Activated CD8-positive, alpha-beta T cell treated with anti-CD3 and anti-CD28 coated beads, Interleukin-2, amount 10 ng/mL, durations not matched to agents 7 days and 5 days (primary cell): ENCODE measurements at regions of chr5 and their contacts with region 1.

Region 1: GRCh38 chr5:76402886-76403765 is at the start of gene IQGAP2:
- DNase-seq: peak; percentile 91
- ATAC-seq: peak; percentile 63
- H3K4me3 Mint-ChIP-seq: peak within 1 kb of the TSS; percentile 89
- H3K27ac Mint-ChIP-seq: peak within 1 kb of the TSS; percentile 98
- H3K4me1 Mint-ChIP-seq: peaks cover 57% of the 10 kb centered on the region
- H3K27me3 Mint-ChIP-seq: peaks cover 4% of the 10 kb centered on the region
- total RNA-seq, gene IQGAP2: 62.7 to 72.1 TPM

Region 2: GRCh38 chr5:76325876-76326491 is 77.1 kb before region 1 on chr5:
- CTCF ChIA-PET with region 1: interaction called, 20 read pairs
- POLR2A ChIA-PET with region 1: interaction called, 22 read pairs
- DNase-seq: peak; percentile 77
- ATAC-seq: peak; percentile 94
- H3K4me3 Mint-ChIP-seq: peak overlapping the region; percentile 50
- H3K27ac Mint-ChIP-seq: peak overlapping the region; percentile 91
- H3K4me1 Mint-ChIP-seq: peaks cover 56% of the 10 kb centered on the region
- H3K27me3 Mint-ChIP-seq: peaks cover under 1% of the 10 kb centered on the region

Region 3: DNA sequence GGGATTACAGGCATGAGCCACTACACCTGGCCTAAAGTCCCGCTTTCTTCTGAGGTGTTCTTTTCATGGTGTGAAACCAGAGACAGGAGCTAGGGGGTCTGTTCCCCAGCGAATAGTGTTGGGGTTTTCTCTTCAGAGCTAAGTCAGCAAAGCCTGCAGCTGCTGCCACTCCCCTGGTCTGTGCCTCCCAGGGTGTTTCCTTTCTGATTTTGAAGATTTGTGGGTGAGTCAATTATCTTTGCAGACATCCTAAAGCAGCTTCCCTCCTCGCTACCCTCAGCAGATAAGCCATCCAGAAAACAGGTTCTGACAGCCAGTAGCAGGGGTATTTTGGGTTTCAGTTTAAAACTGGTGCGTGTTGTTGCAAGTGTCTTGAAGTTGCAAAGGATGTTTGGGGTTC is 72.0 kb before region 1 on chr5:
- CTCF ChIA-PET with region 1: interaction called, 20 read pairs
- POLR2A ChIA-PET with region 1: interaction called, 22 read pairs
- DNase-seq: peak; percentile 60
- ATAC-seq: peak; percentile 79
- H3K4me3 Mint-ChIP-seq: peak overlapping the region; percentile 45
- H3K27ac Mint-ChIP-seq: peak overlapping the region; percentile 89
- H3K4me1 Mint-ChIP-seq: peaks cover 59% of the 10 kb centered on the region
- H3K27me3 Mint-ChIP-seq: no peaks in the 10 kb centered on the region

Region 4: GRCh38 chr5:76376148-76376865 is 26.8 kb before region 1 on chr5:
- CTCF ChIA-PET with region 1: interaction called, 12 read pairs
- POLR2A ChIA-PET with region 1: interaction called, 4 read pairs
- DNase-seq: no peak
- ATAC-seq: no peak
- H3K4me3 Mint-ChIP-seq: no peak overlapping the region
- H3K27ac Mint-ChIP-seq: no peak overlapping the region
- H3K4me1 Mint-ChIP-seq: peaks cover 35% of the 10 kb centered on the region
- H3K27me3 Mint-ChIP-seq: no peaks in the 10 kb centered on the region

Region 5: DNA sequence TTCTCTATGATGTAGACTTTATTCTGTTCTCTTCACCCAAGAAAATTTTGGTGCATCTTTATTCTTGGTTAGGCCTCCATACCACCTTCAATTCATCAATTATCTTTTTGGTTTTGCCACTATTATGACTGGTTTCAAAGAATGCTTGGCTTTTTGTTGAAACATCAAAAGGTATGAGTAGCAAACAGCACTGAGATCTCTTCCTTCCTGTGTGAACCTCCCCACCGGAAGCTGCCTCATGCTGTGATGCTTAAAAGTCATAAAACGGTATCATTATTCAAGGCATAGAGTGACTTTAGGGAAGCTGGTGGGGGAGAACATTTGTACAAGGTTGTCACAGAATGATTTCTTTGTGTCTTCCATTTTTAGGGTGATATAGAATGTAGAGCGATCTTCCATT is 70.5 kb after region 1 on chr5:
- CTCF ChIA-PET with region 1: interaction called, 26 read pairs
- POLR2A ChIA-PET with region 1: interaction called, 25 read pairs
- DNase-seq: peak; percentile 81
- ATAC-seq: peak; percentile 93
- H3K4me3 Mint-ChIP-seq: peak overlapping the region; percentile 42
- H3K27ac Mint-ChIP-seq: peak overlapping the region; percentile 89
- H3K4me1 Mint-ChIP-seq: peaks cover 47% of the 10 kb centered on the region
- H3K27me3 Mint-ChIP-seq: no peaks in the 10 kb centered on the region

Region 6: GRCh38 chr5:76544268-76544926 is 141.3 kb after region 1 on chr5:
- CTCF ChIA-PET with region 1: interaction called, 114 read pairs
- POLR2A ChIA-PET with region 1: interaction called, 64 read pairs
- DNase-seq: peak; percentile 67
- ATAC-seq: peak; percentile 42
- H3K4me3 Mint-ChIP-seq: peak overlapping the region; percentile 61
- H3K27ac Mint-ChIP-seq: peak overlapping the region; percentile 91
- H3K4me1 Mint-ChIP-seq: peaks cover 62% of the 10 kb centered on the region
- H3K27me3 Mint-ChIP-seq: no peaks in the 10 kb centered on the region

Region 7: DNA sequence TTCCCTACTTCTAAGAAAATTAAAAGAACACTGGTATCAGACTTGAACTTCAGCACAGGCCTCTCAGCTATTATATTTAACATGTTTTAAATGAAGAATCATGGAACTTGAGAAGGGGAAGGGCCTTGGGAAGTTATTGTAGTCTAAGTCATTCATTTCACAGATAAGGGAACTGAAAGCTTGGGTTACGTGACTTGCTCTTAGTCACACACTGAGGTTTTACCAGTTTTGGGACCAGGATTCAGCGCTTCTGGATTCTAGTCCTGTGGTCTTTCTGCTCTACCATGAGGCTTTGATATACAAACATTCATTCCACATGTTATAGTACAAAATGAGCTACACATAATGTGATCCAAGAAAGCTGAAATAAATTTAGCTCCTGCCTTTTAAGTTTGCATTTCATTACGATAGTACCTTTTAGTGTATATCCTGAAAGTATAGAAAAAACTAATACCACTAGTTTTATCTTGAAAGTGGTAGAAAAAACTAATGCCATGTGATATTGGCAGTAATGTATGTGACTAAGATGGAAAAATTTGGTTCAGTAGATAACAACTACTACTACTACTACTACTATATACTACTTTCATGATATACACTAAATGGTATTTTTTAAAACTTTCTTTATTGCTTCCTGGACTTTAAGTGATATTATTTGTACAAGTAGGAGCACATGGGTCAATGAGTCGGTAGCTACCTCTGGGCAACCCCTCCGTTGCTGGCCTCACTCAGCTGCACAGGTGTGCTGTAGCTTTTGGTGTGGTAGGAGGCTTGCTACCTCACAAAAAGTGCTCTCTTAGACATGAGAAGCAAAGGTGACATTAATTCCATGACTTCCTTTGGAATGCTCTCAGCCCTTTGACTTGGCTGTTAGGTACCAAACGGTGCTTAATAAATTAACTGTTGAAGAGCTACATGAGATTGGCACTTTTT is 179.4 kb after region 1 on chr5:
- CTCF ChIA-PET with region 1: interaction called, 64 read pairs
- POLR2A ChIA-PET with region 1: interaction called, 9 read pairs
- DNase-seq: no peak
- ATAC-seq: no peak
- H3K4me3 Mint-ChIP-seq: no peak overlapping the region
- H3K27ac Mint-ChIP-seq: no peak overlapping the region
- H3K4me1 Mint-ChIP-seq: peaks cover 2% of the 10 kb centered on the region
- H3K27me3 Mint-ChIP-seq: no peaks in the 10 kb centered on the region

Region 8: DNA sequence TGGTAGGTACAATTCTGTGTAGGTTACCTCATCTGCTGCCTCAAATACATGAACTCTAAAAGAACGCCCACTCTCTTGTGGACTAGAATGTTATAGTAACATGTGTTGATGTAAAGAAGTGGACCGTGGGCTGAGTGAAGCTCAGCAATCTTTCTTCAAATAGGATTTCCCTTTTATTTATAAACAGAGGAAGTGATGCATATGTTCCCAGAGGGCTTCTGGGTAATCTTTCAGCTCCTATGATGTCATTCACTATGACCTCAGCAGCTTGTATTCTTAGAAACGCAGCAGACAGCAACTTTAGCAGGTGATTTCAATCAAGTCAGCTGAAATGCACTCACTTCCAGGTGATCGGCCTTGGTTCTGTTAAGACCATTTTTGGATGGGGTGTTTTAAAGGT is 205.7 kb after region 1 on chr5:
- CTCF ChIA-PET with region 1: no interaction called
- POLR2A ChIA-PET with region 1: no interaction called
- DNase-seq: no peak
- ATAC-seq: no peak
- H3K4me3 Mint-ChIP-seq: no peak overlapping the region
- H3K27ac Mint-ChIP-seq: no peak overlapping the region
- H3K4me1 Mint-ChIP-seq: peaks cover 8% of the 10 kb centered on the region
- H3K27me3 Mint-ChIP-seq: no peaks in the 10 kb centered on the region